ENCODE measurements at regions of chr2 and their contacts with region 1.

Region 1: DNA sequence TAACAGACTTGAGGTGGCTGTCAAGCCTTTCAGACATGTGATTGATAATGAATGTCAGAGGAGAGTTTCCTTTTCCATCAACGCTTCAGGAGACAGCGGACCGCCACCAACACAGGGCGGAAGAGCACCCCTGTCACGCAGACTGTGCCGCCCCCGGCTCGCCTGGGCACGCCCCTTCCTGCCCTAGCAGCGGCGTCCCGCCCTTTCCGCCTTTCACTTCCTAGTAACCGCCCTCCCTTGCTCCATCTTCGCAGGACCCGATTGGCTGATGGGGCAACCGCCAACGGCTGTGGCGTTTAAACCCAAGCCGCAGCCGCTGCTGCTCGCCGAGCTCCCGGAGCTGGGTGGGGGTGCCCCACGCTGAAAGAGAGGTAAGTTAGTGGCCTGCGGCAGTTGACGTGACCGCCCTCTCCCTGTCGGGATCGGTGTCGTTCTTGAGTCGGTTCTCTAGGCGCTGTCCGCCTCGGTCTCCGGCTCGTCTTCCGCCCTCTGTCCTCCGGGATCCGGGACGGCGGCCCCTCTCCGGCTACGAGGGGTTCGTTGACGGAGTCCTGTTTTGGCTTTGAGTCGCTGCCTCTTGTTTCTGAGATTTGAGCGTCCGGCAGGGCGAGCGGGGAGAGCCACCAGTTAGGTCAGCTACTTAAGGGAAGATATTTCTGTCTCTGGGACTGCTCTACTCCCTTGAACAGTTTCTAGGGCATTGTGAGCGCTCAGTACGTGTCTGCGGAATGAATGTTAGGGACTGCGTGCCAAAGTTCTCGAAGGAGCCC is at the start of gene SGO2:
- DNase-seq: peak; percentile 79
- H3K4me3 ChIP-seq: peak within 1 kb of the TSS; percentile 91
- H3K27ac ChIP-seq: peak within 1 kb of the TSS; percentile 53
- H3K27me3 ChIP-seq: peaks cover 5% of the 10 kb centered on the region
- CTCF ChIP-seq: 0 out of 2 replicates have a peak, but pooled peaks have one; percentile 5
- polyA plus RNA-seq, gene SGO2: 3.7 and 8.4 TPM in 2 replicates

Region 2: DNA sequence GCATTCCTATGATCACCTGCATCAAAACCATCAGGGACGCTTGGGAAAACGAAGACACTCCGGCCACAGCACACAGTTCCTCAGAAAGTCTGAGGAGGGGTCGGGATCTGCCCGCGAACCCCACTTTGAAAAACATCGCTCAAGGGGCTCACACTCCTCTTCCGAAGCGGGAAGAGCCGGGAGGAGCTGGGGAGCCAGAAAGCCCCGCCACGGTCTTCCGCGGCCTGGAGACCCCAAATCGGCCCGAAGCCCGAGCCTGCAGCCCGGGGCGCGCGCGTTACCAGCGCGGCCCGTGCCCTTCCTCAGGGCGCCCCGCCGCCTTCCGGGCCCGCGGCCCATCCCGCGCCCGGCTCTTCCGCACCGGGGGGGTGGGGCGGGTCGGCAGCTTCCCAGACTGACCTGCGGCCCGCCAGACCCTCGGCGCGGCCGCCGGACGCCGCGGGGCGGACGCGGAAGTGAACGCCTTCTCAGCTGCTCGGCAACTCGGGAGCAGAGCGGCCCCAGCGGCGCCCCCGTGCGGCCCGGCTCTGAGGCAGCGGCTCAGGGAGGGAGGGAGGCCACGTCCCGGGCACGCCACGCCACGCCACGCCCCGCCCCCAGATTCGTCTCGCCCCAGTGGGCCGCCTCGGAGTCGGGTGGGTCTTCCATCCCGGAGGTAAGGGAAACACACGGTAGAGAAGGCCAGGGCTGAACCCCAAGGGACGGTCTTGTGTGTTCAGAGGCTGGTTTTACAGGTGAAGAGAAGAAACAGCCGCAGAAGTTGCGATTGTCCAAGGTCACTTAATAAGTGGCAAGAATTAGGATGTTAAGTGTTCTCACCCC is 16.2 kb before region 1 on chr2 and contains the start of gene KCTD18:
- CTCF ChIA-PET with region 1: interaction called, 10 read pairs
- POLR2A ChIA-PET with region 1: no interaction called
- DNase-seq: peak; percentile 33
- H3K4me3 ChIP-seq: peak within 1 kb of the TSS; percentile 76
- H3K27ac ChIP-seq: peak within 1 kb of the TSS; percentile 42
- H3K27me3 ChIP-seq: peaks cover 8% of the 10 kb centered on the region
- CTCF ChIP-seq: peak; percentile 70
- polyA plus RNA-seq, gene KCTD18: 9.9 and 13.8 TPM in 2 replicates

Region 3: GRCh38 chr2:200540793-200541192 is 14.7 kb after region 1 on chr2:
- CTCF ChIA-PET with region 1: no interaction called
- POLR2A ChIA-PET with region 1: no interaction called
- DNase-seq: no peak
- H3K4me3 ChIP-seq: no peak overlapping the region
- H3K27ac ChIP-seq: no peak overlapping the region
- H3K27me3 ChIP-seq: no peaks in the 10 kb centered on the region
- CTCF ChIP-seq: no peak

Measured in AG04450 (cell line).